ENCODE measurements at regions of chr9 and their contacts with region 1.

Region 1: DNA sequence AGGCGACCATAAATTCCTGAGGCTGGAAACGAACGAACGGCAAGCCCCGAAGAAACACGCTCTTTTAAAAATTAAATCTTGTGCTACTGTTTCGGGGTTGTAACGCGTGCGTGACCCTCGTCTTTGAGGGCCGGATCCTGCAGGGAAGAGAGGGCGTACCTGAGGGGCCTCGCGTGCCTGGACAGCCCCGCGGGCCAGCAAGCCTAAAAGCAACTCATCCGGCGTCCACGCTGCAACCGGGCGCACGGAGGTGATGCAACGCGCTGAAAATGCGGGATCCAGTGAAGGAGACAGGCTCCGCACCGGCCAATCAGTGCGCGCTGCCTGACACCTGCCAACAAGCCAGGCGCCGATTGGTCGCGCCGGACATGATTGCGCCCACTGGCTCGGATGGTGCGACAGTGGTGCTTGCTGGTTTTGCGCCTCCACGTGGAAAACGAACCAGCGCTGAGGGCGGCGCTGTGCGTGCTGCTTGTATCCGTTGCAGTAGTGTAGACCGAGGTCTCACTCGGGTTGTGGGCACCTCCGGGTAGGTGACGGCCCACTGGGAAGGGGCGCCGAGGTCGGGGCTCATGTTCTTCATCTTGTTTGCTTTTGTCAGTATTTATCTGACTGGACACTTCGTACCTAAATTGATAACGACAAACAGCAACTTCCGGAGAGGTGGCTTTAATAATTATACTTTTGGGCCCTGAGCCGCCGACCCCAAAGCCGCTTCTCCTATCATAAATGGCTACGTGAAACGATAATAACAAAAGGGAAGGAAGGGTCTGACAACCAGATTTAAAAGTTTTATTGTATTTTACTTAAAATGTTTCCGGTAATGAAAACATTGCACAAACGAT is at the start of gene IARS1:
- DNase-seq: peak; percentile 97 to 100 (median 99)
- H3K4me3 ChIP-seq: peak within 1 kb of the TSS; percentile 78
- H3K27ac ChIP-seq: peak within 1 kb of the TSS in 1 of 2 donors; percentile 57
- H3K4me1 ChIP-seq: peaks cover 5% of the 10 kb centered on the region
- H3K27me3 ChIP-seq: no peaks in the 10 kb centered on the region
- CTCF ChIP-seq: peak in 1 of 3 donors; percentile 35
- EP300 ChIP-seq: no peak
- POLR2A ChIP-seq: peak; percentile 64
- total RNA-seq, gene IARS1: 44.4 to 281 (median 64.8) TPM

Region 2: GRCh38 chr9:92276331-92277032 is 17.2 kb before region 1 on chr9:
- intact Hi-C with region 1: no loop called
- DNase-seq: no peak
- H3K4me3 ChIP-seq: no peak overlapping the region
- H3K27ac ChIP-seq: no peak overlapping the region
- H3K4me1 ChIP-seq: no peaks in the 10 kb centered on the region
- H3K27me3 ChIP-seq: no peaks in the 10 kb centered on the region
- CTCF ChIP-seq: no peak
- EP300 ChIP-seq: no peak
- POLR2A ChIP-seq: no peak

Region 3: GRCh38 chr9:92325269-92325990 is 31.8 kb after region 1 on chr9 and contains the starts of genes CENPP and NOL8:
- intact Hi-C with region 1: loop called in 1 of 4 experiments (anchors 2 kb)
- DNase-seq: peak; percentile 80 to 85 (median 81)
- H3K4me3 ChIP-seq: peak within 1 kb of the TSS; percentile 55
- H3K27ac ChIP-seq: peak within 1 kb of the TSS; percentile 88 to 93
- H3K4me1 ChIP-seq: peaks cover 3% of the 10 kb centered on the region
- H3K27me3 ChIP-seq: no peaks in the 10 kb centered on the region
- CTCF ChIP-seq: peak in 1 of 3 donors; percentile 23
- EP300 ChIP-seq: peak; percentile 51
- POLR2A ChIP-seq: no peak
- total RNA-seq, gene CENPP: 3.9 to 9.5 (median 5.8) TPM
- total RNA-seq, gene NOL8: 19.2 to 35.4 (median 28.8) TPM